CD14-positive monocyte (primary cell): ENCODE measurements at regions of chr2 and their contacts with region 1.

Region 1: DNA sequence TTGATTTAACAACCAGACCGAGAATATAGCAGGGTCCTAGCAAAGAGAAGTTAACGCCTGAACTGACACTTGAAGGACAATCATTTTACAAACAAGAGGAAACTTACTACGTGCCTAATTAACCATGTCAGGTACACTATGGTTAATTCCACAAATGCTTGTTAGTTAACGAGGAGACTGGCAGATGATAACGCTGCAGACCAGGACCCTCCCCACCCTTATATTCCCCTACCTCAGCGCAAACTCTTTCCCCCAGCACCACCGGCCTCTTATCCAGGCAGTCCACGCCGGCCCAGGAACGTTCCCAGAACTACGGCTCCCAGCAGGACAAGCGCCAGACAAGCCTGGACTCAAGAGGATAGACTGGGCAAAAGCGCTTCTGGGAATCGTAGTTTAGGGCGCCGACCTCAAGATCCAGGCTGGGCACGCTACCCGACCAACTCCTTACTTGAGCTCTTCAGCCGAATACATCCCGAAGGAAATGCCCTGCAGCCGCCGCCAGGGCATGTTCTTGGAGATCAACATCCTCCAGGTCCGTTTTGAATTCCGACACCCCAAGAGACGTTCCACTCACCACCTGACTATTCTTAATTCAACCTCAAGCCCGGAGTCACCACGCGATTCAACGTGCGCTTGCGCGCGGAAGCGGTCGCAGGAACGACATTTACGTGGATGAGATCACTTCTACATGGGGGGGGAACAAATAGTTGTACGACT is at the start of gene POLR1A:
- DNase-seq: peak; percentile 79 to 87 (median 80)
- H3K4me3 ChIP-seq: peak within 1 kb of the TSS; percentile 70 to 94 (median 79)
- H3K4me3 Mint-ChIP-seq: peak within 1 kb of the TSS; percentile 93 to 98
- H3K27ac ChIP-seq: peak within 1 kb of the TSS; percentile 44 to 88
- H3K27ac Mint-ChIP-seq: peak within 1 kb of the TSS; percentile 94 to 100 (median 99)
- H3K4me1 ChIP-seq: peaks cover 17 to 24% of the 10 kb centered on the region in 2 donors
- H3K4me1 Mint-ChIP-seq: peaks cover 25% of the 10 kb centered on the region
- H3K27me3 ChIP-seq: no peaks in the 10 kb centered on the region
- H3K27me3 Mint-ChIP-seq: peaks cover 0 to 1% (median 0%) of the 10 kb centered on the region in 3 donors
- CTCF ChIP-seq: no peak
- polyA plus RNA-seq, gene POLR1A: 0.45 to 2.1 (median 1.6) TPM

Region 2: GRCh38 chr2:84970868-84971509 is 1134.4 kb before region 1 on chr2 and contains the start of gene KCMF1:
- intact Hi-C with region 1: loop called in 1 of 2 experiments (anchors 5 kb)
- DNase-seq: peak; percentile 29 to 56 (median 39)
- H3K4me3 ChIP-seq: peak within 1 kb of the TSS; percentile 81 to 93 (median 90)
- H3K4me3 Mint-ChIP-seq: peak within 1 kb of the TSS; percentile 94 to 100
- H3K27ac ChIP-seq: peak within 1 kb of the TSS; percentile 89 to 98
- H3K27ac Mint-ChIP-seq: peak within 1 kb of the TSS; percentile 94 to 99 (median 98)
- H3K4me1 ChIP-seq: peaks cover 46 to 63% of the 10 kb centered on the region in 2 donors
- H3K4me1 Mint-ChIP-seq: peaks cover 58% of the 10 kb centered on the region
- H3K27me3 ChIP-seq: no peaks in the 10 kb centered on the region
- H3K27me3 Mint-ChIP-seq: no peaks in the 10 kb centered on the region
- CTCF ChIP-seq: no peak
- polyA plus RNA-seq, gene KCMF1: 22.5 to 52.9 (median 28.5) TPM

Region 3: GRCh38 chr2:85611705-85612587 is 493.5 kb before region 1 on chr2 and contains the start of gene C2orf68:
- intact Hi-C with region 1: loop called (anchors 10 kb)
- DNase-seq: peak; percentile 77 to 79 (median 78)
- H3K4me3 ChIP-seq: peak within 1 kb of the TSS; percentile 57 to 93 (median 86)
- H3K4me3 Mint-ChIP-seq: peak within 1 kb of the TSS; percentile 97 to 100
- H3K27ac ChIP-seq: peak within 1 kb of the TSS; percentile 71 to 87
- H3K27ac Mint-ChIP-seq: peak within 1 kb of the TSS; percentile 82 to 94 (median 92)
- H3K4me1 ChIP-seq: peaks cover 27 to 39% of the 10 kb centered on the region in 2 donors
- H3K4me1 Mint-ChIP-seq: peaks cover 27% of the 10 kb centered on the region
- H3K27me3 ChIP-seq: no peaks in the 10 kb centered on the region
- H3K27me3 Mint-ChIP-seq: peaks cover 0 to 1% (median 0%) of the 10 kb centered on the region in 3 donors
- CTCF ChIP-seq: no peak
- polyA plus RNA-seq, gene C2orf68: 24.2 to 32.9 (median 30.7) TPM

Region 4: DNA sequence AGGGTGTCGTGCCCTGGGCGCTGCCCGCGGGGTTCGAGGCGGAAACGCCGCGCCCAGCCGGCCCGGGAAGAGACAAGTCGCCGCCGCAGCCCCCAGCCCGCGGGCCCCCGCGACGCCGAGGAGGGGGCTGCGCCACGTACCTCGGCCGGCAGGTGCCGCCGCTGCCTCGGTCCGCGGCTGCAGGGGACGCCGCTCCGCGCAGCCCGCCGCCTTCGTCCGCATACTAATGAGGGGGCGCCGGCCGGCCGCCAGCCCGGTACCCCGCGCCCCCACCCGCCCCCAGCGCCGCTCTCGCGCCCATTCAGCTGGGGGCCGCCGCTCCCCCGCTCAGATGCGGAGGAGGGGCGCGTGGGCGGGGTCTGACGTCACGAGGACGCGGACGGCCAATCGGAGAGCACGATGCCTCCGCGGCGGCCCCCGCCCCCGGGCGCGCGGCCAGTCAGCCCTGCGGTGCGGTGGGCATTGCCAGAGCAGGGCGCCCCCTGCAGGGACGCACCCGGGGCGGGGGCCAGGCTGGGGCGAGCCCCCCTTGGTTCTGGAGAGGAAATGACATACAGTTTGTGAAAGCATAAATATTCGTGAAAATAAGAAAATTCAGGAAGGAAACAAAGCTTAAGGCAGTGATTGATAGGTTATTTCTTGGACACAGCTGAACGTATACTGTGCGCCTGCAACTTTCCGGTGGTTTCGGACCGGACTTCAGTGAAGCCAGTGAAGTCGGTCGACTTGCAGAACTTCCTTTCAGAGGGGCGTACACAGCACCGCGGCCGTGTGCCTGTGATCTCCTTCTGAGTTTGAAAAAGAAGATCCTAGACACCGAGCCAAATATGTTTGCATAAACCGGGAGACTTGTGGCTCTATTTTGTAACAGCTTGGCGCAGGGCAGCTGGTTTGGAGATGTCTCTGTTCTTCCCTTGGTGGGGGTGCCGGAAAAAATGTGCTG is 216.5 kb before region 1 on chr2 and contains the start of gene ST3GAL5:
- intact Hi-C with region 1: loop called in 1 of 2 experiments (anchors 5 kb)
- DNase-seq: peak; percentile 83 to 91 (median 87)
- H3K4me3 ChIP-seq: peak within 1 kb of the TSS; percentile 82 to 84 (median 84)
- H3K4me3 Mint-ChIP-seq: peak within 1 kb of the TSS; percentile 93 to 98
- H3K27ac ChIP-seq: peak within 1 kb of the TSS; percentile 86 to 91
- H3K27ac Mint-ChIP-seq: peak within 1 kb of the TSS; percentile 88 to 98 (median 97)
- H3K4me1 ChIP-seq: peaks cover 55 to 69% of the 10 kb centered on the region in 2 donors
- H3K4me1 Mint-ChIP-seq: peaks cover 75% of the 10 kb centered on the region
- H3K27me3 ChIP-seq: no peaks in the 10 kb centered on the region
- H3K27me3 Mint-ChIP-seq: peaks cover 0 to 3% (median 0%) of the 10 kb centered on the region in 3 donors
- CTCF ChIP-seq: peak; percentile 85
- polyA plus RNA-seq, gene ST3GAL5: 14.0 to 51.2 (median 19.5) TPM

Region 5: DNA sequence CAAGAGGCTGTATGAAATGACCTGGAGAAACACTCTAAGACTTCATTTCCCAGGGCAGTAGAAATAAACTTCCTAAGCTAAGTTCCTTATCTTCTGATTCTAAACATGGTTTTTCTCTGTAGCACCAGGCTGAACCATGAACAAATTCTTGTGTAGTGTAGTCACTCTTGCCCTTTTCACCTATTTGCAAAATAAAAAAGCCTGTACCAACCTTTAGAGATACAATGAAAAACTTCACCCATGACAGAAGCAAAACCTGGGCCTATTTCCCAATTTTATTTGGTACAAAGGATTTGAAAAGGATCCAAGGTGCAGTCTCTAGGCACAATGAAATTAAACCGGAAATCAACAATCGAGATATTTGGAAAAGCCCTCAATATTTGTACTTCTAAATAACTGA is 43.4 kb before region 1 on chr2:
- intact Hi-C with region 1: no loop called
- DNase-seq: no peak
- H3K4me3 ChIP-seq: no peak overlapping the region
- H3K4me3 Mint-ChIP-seq: no peak overlapping the region
- H3K27ac ChIP-seq: no peak overlapping the region
- H3K27ac Mint-ChIP-seq: no peak overlapping the region
- H3K4me1 ChIP-seq: no peaks in the 10 kb centered on the region
- H3K4me1 Mint-ChIP-seq: no peaks in the 10 kb centered on the region
- H3K27me3 ChIP-seq: no peaks in the 10 kb centered on the region
- H3K27me3 Mint-ChIP-seq: no peaks in the 10 kb centered on the region
- CTCF ChIP-seq: no peak

Region 6: DNA sequence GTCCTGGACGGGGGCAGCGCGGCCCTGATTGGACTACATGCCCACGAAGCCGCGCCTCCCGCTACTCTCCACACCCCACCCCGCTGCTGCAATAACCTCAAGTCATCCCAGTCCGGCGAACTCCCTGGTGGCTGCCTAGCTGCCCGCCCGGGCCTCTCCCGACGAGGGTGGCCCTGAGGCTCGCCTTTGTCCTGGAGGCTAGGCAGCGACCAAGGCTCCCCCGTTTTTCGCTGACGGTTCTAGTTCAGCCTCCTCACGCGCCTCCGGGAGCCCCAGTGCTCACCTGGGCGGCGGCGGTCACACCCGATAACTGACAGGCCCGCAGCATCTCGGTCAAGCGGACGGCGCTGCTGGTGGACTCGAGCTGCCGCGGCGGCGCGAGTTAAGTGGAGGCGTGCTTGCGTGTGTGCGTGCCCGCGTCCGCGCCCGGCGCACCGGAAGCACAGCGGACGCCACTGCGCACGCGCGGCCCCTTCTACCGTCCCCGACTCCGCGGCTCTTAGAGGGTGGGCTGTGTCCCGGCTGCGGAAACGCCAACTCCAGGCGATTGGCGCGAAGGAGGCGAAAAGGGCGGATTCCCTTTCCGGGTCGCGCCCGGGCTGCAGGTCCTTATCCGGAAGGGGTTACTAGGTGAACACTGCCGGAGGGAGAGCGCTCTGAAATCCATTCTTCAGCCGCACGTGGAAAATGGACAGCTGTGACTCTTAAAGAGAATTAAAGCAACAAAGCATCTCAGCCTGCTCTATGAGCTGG is 89.8 kb after region 1 on chr2 and contains the start of gene IMMT:
- intact Hi-C with region 1: loop called (anchors 5 to 10 kb)
- DNase-seq: peak; percentile 93 to 94 (median 93)
- H3K4me3 ChIP-seq: peak within 1 kb of the TSS; percentile 82 to 97 (median 93)
- H3K4me3 Mint-ChIP-seq: peak within 1 kb of the TSS; percentile 91 to 96
- H3K27ac ChIP-seq: peak within 1 kb of the TSS; percentile 97 to 99
- H3K27ac Mint-ChIP-seq: peak within 1 kb of the TSS; percentile 96 to 98 (median 97)
- H3K4me1 ChIP-seq: peaks cover 22 to 31% of the 10 kb centered on the region in 2 donors
- H3K4me1 Mint-ChIP-seq: peaks cover 36% of the 10 kb centered on the region
- H3K27me3 ChIP-seq: no peaks in the 10 kb centered on the region
- H3K27me3 Mint-ChIP-seq: peaks cover 0 to 2% (median 1%) of the 10 kb centered on the region in 3 donors
- CTCF ChIP-seq: no peak
- polyA plus RNA-seq, gene IMMT: 24.3 to 54.0 (median 41.2) TPM